ENCODE measurements at regions of chr11 and their contacts with region 1.

Region 1: DNA sequence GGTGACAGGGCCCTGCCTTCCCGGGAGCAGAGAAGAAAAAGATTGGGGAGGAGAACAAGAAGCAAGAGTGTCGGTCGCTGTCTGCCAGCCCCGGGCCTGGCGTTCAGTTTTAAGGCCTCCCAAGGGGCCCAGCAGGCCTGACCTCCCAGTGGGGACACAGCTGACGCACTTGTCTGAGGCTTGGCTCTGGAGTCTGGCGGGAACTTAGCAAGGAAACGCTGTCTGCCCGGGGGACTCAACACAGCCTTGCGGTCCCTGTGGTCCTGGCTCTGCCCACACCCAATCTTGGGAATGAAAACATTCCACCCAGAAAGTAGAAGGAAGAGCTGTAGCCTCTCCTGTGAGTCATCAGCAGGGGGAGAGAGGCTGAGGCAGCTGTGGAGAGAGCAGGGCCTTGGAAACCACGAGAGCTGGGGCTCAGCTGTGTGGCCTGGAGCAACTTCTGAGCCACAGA is 54.4 kb downstream of the TRAF6 start:
- DNase-seq: peak; percentile 98
- ATAC-seq: peak; percentile 96
- H3K4me3 ChIP-seq: no peak overlapping the region
- H3K27ac ChIP-seq: peak overlapping the region; percentile 95
- H3K4me1 ChIP-seq: peaks cover 34% of the 10 kb centered on the region
- H3K27me3 ChIP-seq: no peaks in the 10 kb centered on the region
- CTCF ChIP-seq: no peak
- POLR2A ChIP-seq: peak; percentile 58
- RAD21 ChIP-seq: peak; percentile 38

Region 2: GRCh38 chr11:36405585-36406367 is 49.9 kb before region 1 on chr11:
- CTCF ChIA-PET with region 1: no interaction called
- POLR2A ChIA-PET with region 1: interaction called, 10 read pairs
- dilution Hi-C with region 1: no loop called
- in situ Hi-C with region 1: no loop called
- intact Hi-C with region 1: no loop called
- DNase-seq: no peak
- ATAC-seq: no peak
- H3K4me3 ChIP-seq: no peak overlapping the region
- H3K27ac ChIP-seq: no peak overlapping the region
- H3K4me1 ChIP-seq: peaks cover 22% of the 10 kb centered on the region
- H3K27me3 ChIP-seq: no peaks in the 10 kb centered on the region
- CTCF ChIP-seq: no peak
- POLR2A ChIP-seq: no peak
- RAD21 ChIP-seq: no peak

Measured in IMR-90 (cell line).